Naive thymus-derived CD8-positive, alpha-beta T cell (primary cell): ENCODE measurements at regions of chr12 and their contacts with region 1.

Region 1: GRCh38 chr12:123106628-123107359 is 44.1 kb downstream of the PITPNM2 start:
- DNase-seq: peak in 9 of 10 donors; percentile 23 to 78 (median 45)
- ATAC-seq: peak; percentile 91
- H3K4me3 Mint-ChIP-seq: peak overlapping the region; percentile 43 to 84 (median 76)
- H3K27ac Mint-ChIP-seq: peak overlapping the region; percentile 89 to 97 (median 96)
- H3K4me1 Mint-ChIP-seq: peaks cover 44 to 76% (median 72%) of the 10 kb centered on the region in 4 donors
- H3K27me3 Mint-ChIP-seq: no peaks in the 10 kb centered on the region

Region 2: DNA sequence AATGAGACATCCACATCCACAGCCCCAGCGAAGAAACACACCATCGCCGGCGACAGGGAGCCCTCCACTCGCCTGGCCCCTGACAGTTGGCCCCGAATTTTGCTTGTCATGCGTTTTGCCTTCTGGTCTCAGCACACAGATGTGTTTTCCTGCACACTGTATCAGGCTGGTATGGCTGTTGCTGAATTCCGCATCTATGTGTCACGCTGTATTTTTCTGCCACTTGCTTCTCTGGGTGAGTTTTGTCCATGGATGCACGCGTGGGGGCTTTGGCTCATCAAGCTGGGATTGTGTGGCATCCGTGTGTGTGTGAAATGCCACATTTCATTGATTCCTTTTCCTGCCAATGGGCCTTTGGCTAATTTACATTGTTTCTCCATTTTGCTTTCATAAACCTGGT is 99.8 kb before region 1 on chr12:
- POLR2A ChIA-PET with region 1: no interaction called
- DNase-seq: no peak
- ATAC-seq: no peak
- H3K4me3 Mint-ChIP-seq: no peak overlapping the region
- H3K27ac Mint-ChIP-seq: no peak overlapping the region
- H3K4me1 Mint-ChIP-seq: peaks cover 0 to 6% (median under 1%) of the 10 kb centered on the region in 4 donors
- H3K27me3 Mint-ChIP-seq: no peaks in the 10 kb centered on the region

Region 3: DNA sequence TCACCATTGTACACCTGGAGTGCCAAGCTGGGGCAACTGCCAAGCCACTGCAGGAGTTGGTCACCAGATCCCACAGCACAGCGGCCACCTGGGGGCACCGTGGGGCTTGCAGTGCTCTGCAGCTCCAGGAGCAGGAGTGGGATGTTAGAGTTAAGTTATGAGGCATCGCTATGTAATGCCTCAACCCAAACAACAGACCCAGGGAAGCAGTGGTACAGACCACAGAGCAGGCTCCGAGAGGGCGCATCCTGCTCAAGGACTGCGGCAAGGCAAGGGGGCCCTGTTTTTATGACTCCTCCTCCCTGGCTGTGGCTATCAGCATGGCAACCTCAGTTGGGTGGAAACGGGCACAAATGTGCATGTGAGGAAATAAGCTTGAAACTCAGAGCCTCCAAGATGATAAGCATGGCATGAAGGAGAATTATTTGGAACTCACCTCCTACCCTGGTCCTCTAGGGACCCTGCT is 63.2 kb before region 1 on chr12:
- POLR2A ChIA-PET with region 1: interaction called, 10 read pairs
- DNase-seq: peak; percentile 42 to 89 (median 70)
- ATAC-seq: peak; percentile 98 to 99
- H3K4me3 Mint-ChIP-seq: peak overlapping the region in 9 of 10 donors; percentile 11 to 77 (median 65)
- H3K27ac Mint-ChIP-seq: peak overlapping the region; percentile 88 to 99 (median 94)
- H3K4me1 Mint-ChIP-seq: peaks cover 29 to 50% (median 47%) of the 10 kb centered on the region in 4 donors
- H3K27me3 Mint-ChIP-seq: no peaks in the 10 kb centered on the region

Region 4: GRCh38 chr12:123160801-123161487 is 54.1 kb after region 1 on chr12:
- POLR2A ChIA-PET with region 1: no interaction called
- DNase-seq: no peak
- ATAC-seq: no peak
- H3K4me3 Mint-ChIP-seq: no peak overlapping the region
- H3K27ac Mint-ChIP-seq: no peak overlapping the region
- H3K4me1 Mint-ChIP-seq: no peaks in the 10 kb centered on the region
- H3K27me3 Mint-ChIP-seq: no peaks in the 10 kb centered on the region